ENCODE measurements at regions of chr2 and their contacts with region 1.

Region 1: GRCh38 chr2:96305091-96305978 is at the start of gene SNRNP200:
- DNase-seq: peak; percentile 92
- H3K4me3 Mint-ChIP-seq: peak within 1 kb of the TSS; percentile 100
- H3K27ac Mint-ChIP-seq: peak within 1 kb of the TSS; percentile 98
- H3K4me1 Mint-ChIP-seq: peaks cover 49% of the 10 kb centered on the region
- H3K27me3 Mint-ChIP-seq: no peaks in the 10 kb centered on the region
- total RNA-seq, gene SNRNP200: 179 to 181 TPM

Region 2: GRCh38 chr2:96091533-96092334 is 213.6 kb before region 1 on chr2:
- CTCF ChIA-PET with region 1: no interaction called
- intact Hi-C with region 1: no loop called
- DNase-seq: no peak
- H3K4me3 Mint-ChIP-seq: no peak overlapping the region
- H3K27ac Mint-ChIP-seq: no peak overlapping the region
- H3K4me1 Mint-ChIP-seq: no peaks in the 10 kb centered on the region
- H3K27me3 Mint-ChIP-seq: no peaks in the 10 kb centered on the region

Region 3: DNA sequence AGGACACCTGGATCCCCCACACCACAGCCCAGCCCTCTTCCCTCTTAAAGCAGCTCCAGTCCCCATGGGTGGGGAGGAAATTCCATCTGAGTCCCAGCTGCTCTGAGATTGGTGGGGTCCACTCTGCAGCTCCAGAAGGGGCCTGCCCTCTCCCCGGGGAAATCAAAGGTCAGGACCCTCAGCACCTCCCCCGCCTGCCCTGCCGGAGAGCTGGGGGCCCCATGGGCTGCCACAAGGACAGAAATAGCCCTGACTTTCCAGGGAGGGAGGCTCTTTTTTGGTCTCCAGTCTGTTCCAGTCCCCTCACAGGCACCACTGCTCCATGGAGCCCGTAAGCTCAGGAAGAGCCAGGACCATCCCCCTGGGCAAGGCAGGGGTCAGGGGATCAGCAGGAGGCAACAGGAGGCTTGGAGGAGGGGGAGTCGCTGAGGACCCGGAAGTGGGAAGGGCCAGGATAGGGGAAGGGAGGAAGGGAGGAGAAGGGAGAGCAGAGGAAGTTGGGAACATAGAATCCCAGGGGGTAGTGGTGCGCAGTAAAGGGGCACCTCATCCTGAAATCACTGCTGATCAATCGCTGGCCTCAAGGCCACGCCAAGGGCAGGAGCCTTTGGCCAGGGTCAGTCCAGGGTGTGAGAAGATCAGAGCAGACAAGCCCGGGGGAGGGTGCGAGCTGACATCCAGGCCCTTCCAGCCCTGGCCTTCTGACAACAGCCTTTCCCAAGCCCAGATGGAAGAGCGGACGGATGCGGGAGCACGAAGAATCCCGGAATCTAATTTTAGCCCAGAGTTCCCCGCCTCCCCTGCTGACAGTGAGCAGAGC is 196.6 kb before region 1 on chr2:
- CTCF ChIA-PET with region 1: no interaction called
- intact Hi-C with region 1: no loop called
- DNase-seq: peak; percentile 3
- H3K4me3 Mint-ChIP-seq: no peak overlapping the region
- H3K27ac Mint-ChIP-seq: no peak overlapping the region
- H3K4me1 Mint-ChIP-seq: no peaks in the 10 kb centered on the region
- H3K27me3 Mint-ChIP-seq: no peaks in the 10 kb centered on the region

Region 4: GRCh38 chr2:96315400-96316071 is 10.2 kb after region 1 on chr2:
- CTCF ChIA-PET with region 1: interaction called, 3 read pairs
- intact Hi-C with region 1: loop called (anchors 1 kb)
- DNase-seq: peak; percentile 40
- H3K4me3 Mint-ChIP-seq: no peak overlapping the region
- H3K27ac Mint-ChIP-seq: no peak overlapping the region
- H3K4me1 Mint-ChIP-seq: peaks cover 21% of the 10 kb centered on the region
- H3K27me3 Mint-ChIP-seq: no peaks in the 10 kb centered on the region

Region 5: DNA sequence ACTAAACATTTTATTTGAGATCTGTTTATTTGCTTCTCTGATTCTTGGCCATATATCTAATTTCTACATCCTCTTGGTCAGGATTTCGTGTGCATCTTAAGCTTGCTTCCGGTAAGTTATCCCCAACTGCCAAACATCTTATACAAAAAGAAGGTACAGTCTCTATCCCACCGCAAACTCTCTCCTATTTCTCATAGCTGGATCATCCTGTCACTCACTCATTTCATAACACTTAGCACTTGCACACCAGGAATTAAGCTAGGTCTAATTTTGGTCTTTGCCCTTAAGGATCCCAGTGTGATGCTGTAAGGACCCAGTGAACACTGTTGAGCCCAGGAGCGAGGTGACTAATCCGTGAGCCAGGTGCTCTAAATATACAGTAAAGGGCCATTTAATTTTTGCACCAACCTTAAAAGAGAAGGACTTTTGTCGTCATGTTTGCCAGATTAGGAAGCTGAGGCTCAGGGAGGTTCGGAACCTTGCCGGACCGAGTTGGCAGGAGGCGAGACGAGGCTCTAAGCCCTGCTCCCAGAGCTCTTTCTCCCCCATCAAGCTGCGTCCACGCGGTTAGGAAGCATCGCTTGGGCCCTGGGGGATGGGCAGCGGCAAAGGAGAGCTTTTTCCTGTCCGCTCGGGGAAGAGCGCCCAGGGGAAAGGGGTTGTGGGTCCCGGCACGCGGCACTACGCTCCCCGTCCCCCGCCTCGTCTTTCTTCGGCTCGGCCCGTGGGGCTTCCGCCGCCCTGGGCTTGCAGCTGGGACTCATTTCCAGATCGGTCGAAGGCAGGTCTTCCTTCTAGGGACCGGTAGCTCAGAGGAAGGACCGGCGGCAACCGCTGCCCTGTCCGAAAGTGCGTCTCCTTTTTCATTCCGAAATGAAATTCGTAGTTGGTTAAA is 15.6 kb after region 1 on chr2:
- CTCF ChIA-PET with region 1: interaction called, 8 read pairs
- intact Hi-C with region 1: loop called (anchors 1 kb)
- DNase-seq: peak; percentile 36
- H3K4me3 Mint-ChIP-seq: peak overlapping the region; percentile 88
- H3K27ac Mint-ChIP-seq: peak overlapping the region; percentile 39
- H3K4me1 Mint-ChIP-seq: peaks cover 41% of the 10 kb centered on the region
- H3K27me3 Mint-ChIP-seq: peaks cover 2% of the 10 kb centered on the region

Region 6: GRCh38 chr2:96330407-96330806 is 25.1 kb after region 1 on chr2:
- CTCF ChIA-PET with region 1: no interaction called
- intact Hi-C with region 1: loop called (anchors 1 kb)
- DNase-seq: no peak
- H3K4me3 Mint-ChIP-seq: no peak overlapping the region
- H3K27ac Mint-ChIP-seq: peak overlapping the region; percentile 13
- H3K4me1 Mint-ChIP-seq: peaks cover 47% of the 10 kb centered on the region
- H3K27me3 Mint-ChIP-seq: no peaks in the 10 kb centered on the region

Region 7: GRCh38 chr2:96342085-96342484 is 36.8 kb after region 1 on chr2:
- CTCF ChIA-PET with region 1: interaction called, 3 read pairs
- intact Hi-C with region 1: loop called (anchors 1 kb)
- DNase-seq: peak; percentile 44
- H3K4me3 Mint-ChIP-seq: no peak overlapping the region
- H3K27ac Mint-ChIP-seq: no peak overlapping the region
- H3K4me1 Mint-ChIP-seq: peaks cover 38% of the 10 kb centered on the region
- H3K27me3 Mint-ChIP-seq: no peaks in the 10 kb centered on the region

Measured in activated naive CD4-positive, alpha-beta T cell treated with anti-CD3 and anti-CD28 coated beads for 36 hours (primary cell).